ENCODE measurements at regions of chr13 and their contacts with region 1.

Region 1: DNA sequence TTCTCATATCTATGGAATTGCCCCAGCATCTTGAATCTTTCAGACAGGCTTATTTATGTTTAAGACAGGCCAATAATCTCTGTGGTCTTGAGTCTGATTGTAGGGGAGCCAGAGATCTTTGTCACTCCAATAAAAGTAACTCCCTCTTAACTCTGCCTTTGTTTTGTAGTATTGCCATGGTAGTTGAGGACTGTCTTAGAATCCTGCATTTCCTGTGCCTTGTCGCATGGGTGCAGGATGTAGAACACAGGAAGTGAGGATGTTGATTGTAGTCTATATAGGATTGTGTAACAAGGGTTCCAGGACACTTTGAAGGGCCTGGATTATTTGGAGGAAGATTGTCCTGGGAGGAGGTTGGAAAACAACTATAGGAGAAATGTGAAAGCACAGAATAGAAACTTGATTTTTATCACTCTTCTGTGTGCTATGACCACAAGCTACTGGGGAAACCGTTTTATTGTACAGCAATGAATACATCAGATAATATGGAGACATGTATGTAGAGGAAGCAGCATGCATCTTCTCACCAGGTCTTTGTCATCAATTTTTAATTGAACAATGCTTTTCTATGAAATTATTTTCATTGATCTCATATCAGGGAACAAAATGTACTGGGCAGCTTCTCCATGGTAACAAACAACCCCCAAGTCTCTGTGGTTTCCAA is 411.7 kb downstream of the FGF9 start:
- DNase-seq: peak in 3 of 9 donors; percentile 24 to 47 (median 33)
- ATAC-seq: peak; percentile 57
- H3K4me3 ChIP-seq: no peak overlapping the region
- H3K4me3 Mint-ChIP-seq: peak overlapping the region in 6 of 10 donors; percentile 1 to 63 (median 4)
- H3K27ac ChIP-seq: no peak overlapping the region
- H3K27ac Mint-ChIP-seq: peak overlapping the region in 6 of 9 donors; percentile 4 to 59 (median 25)
- H3K4me1 ChIP-seq: peaks cover 4 to 11% of the 10 kb centered on the region in 2 donors
- H3K4me1 Mint-ChIP-seq: peaks cover 9 to 32% (median 27%) of the 10 kb centered on the region in 7 donors
- H3K27me3 ChIP-seq: no peaks in the 10 kb centered on the region
- H3K27me3 Mint-ChIP-seq: peaks cover 0 to 5% (median 0%) of the 10 kb centered on the region in 5 donors

Region 2: GRCh38 chr13:22107548-22107947 is 25.0 kb after region 1 on chr13:
- CTCF ChIA-PET with region 1: no interaction called
- POLR2A ChIA-PET with region 1: no interaction called
- intact Hi-C with region 1: loop called in 1 of 2 experiments (anchors 2 kb)
- DNase-seq: peak in 1 of 9 donors; percentile 11
- ATAC-seq: no peak
- H3K4me3 ChIP-seq: no peak overlapping the region
- H3K4me3 Mint-ChIP-seq: peak overlapping the region in 6 of 10 donors; percentile 7 to 66 (median 40)
- H3K27ac ChIP-seq: no peak overlapping the region
- H3K27ac Mint-ChIP-seq: peak overlapping the region in 7 of 9 donors; percentile 5 to 80 (median 38)
- H3K4me1 ChIP-seq: peaks cover 23% of the 10 kb centered on the region in 2 donors
- H3K4me1 Mint-ChIP-seq: peaks cover 14 to 60% (median 37%) of the 10 kb centered on the region in 7 donors
- H3K27me3 ChIP-seq: no peaks in the 10 kb centered on the region
- H3K27me3 Mint-ChIP-seq: peaks cover 0 to 2% (median 0%) of the 10 kb centered on the region in 5 donors

Region 3: GRCh38 chr13:22121146-22121739 is 38.7 kb after region 1 on chr13:
- CTCF ChIA-PET with region 1: no interaction called
- POLR2A ChIA-PET with region 1: no interaction called
- intact Hi-C with region 1: no loop called
- DNase-seq: no peak
- ATAC-seq: no peak
- H3K4me3 ChIP-seq: no peak overlapping the region
- H3K4me3 Mint-ChIP-seq: no peak overlapping the region
- H3K27ac ChIP-seq: no peak overlapping the region
- H3K27ac Mint-ChIP-seq: no peak overlapping the region
- H3K4me1 ChIP-seq: no peaks in the 10 kb centered on the region
- H3K4me1 Mint-ChIP-seq: peaks cover 4 to 17% (median 13%) of the 10 kb centered on the region in 7 donors
- H3K27me3 ChIP-seq: no peaks in the 10 kb centered on the region
- H3K27me3 Mint-ChIP-seq: no peaks in the 10 kb centered on the region

Measured in naive thymus-derived CD4-positive, alpha-beta T cell (primary cell).